Activated naive CD4-positive, alpha-beta T cell treated with anti-CD3 and anti-CD28 coated beads for 36 hours (primary cell): ENCODE measurements at regions of chr16 and their contacts with region 1.

Region 1: GRCh38 chr16:56950881-56951771 is 10.6 kb upstream of the CETP start:
- DNase-seq: peak; percentile 76
- H3K4me3 Mint-ChIP-seq: no peak overlapping the region
- H3K27ac Mint-ChIP-seq: no peak overlapping the region
- H3K4me1 Mint-ChIP-seq: peaks cover 20% of the 10 kb centered on the region
- H3K27me3 Mint-ChIP-seq: no peaks in the 10 kb centered on the region

Region 2: DNA sequence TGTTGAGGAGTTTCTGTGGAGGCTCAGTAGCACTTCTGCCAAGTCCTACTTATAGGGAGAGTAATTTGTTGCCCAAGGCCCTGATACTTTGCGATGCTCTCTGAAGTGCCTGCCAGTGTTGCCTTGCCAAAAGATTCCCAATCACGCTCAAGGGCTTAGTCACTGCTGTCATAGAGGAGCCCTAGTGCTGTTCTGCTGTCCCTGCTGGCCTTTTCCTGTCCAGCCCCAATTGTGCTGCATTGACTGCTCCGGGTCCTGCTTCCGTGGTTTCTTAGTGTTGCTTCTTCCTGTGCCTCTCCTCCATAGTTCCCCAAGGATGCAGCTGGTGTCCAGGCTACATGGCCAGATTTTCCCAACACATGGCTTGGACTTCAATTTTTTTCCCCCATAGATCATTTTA is 207.3 kb before region 1 on chr16:
- CTCF ChIA-PET with region 1: no interaction called
- intact Hi-C with region 1: no loop called
- DNase-seq: no peak
- H3K4me3 Mint-ChIP-seq: no peak overlapping the region
- H3K27ac Mint-ChIP-seq: no peak overlapping the region
- H3K4me1 Mint-ChIP-seq: peaks cover 27% of the 10 kb centered on the region
- H3K27me3 Mint-ChIP-seq: no peaks in the 10 kb centered on the region

Region 3: GRCh38 chr16:56789360-56789759 is 161.8 kb before region 1 on chr16:
- CTCF ChIA-PET with region 1: interaction called, 5 read pairs
- intact Hi-C with region 1: loop called (anchors 1 kb)
- DNase-seq: peak; percentile 60
- H3K4me3 Mint-ChIP-seq: no peak overlapping the region
- H3K27ac Mint-ChIP-seq: no peak overlapping the region
- H3K4me1 Mint-ChIP-seq: no peaks in the 10 kb centered on the region
- H3K27me3 Mint-ChIP-seq: no peaks in the 10 kb centered on the region

Region 4: GRCh38 chr16:56866943-56867830 is 83.9 kb before region 1 on chr16:
- CTCF ChIA-PET with region 1: interaction called, 200 read pairs
- intact Hi-C with region 1: loop called (anchors 1 kb)
- DNase-seq: peak; percentile 64
- H3K4me3 Mint-ChIP-seq: no peak overlapping the region
- H3K27ac Mint-ChIP-seq: no peak overlapping the region
- H3K4me1 Mint-ChIP-seq: peaks cover 15% of the 10 kb centered on the region
- H3K27me3 Mint-ChIP-seq: no peaks in the 10 kb centered on the region

Region 5: DNA sequence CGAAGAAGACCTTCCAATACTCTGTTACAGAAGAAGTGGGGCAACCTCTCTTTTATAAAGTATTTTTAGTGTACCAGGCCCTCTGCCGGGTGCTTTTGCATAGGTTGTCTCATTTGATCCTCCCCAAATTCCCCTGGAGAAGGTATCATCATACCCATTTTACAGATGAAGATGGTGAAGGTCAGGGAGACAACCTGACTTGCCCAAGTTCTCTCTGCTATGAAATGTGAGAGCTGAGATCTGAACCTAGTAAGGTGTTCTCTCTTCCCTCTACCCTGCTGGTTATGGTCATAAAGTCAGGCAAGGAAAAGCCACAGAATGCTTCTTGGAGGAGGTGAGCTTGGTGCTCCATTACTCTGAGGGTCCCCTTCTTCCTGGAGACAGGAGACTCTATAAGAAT is 47.3 kb before region 1 on chr16:
- CTCF ChIA-PET with region 1: no interaction called
- intact Hi-C with region 1: no loop called
- DNase-seq: no peak
- H3K4me3 Mint-ChIP-seq: no peak overlapping the region
- H3K27ac Mint-ChIP-seq: no peak overlapping the region
- H3K4me1 Mint-ChIP-seq: peaks cover 14% of the 10 kb centered on the region
- H3K27me3 Mint-ChIP-seq: no peaks in the 10 kb centered on the region